ENCODE measurements at regions of chr12 and their contacts with region 1.

Region 1: GRCh38 chr12:57368349-57369095 is 62.3 kb downstream of the R3HDM2 start:
- DNase-seq: no peak
- H3K4me3 ChIP-seq: no peak overlapping the region
- H3K27ac ChIP-seq: no peak overlapping the region
- H3K4me1 ChIP-seq: no peaks in the 10 kb centered on the region
- H3K27me3 ChIP-seq: no peaks in the 10 kb centered on the region
- CTCF ChIP-seq: peak in 1 of 3 experiments; percentile 32; a peak in 1 of 4 replicates
- EP300 ChIP-seq: no peak
- POLR2A ChIP-seq: no peak
- RAD21 ChIP-seq: peak in 1 of 2 experiments; percentile 36; a peak in 2 of 4 replicates

Region 2: GRCh38 chr12:57332646-57333312 is 35.7 kb before region 1 on chr12:
- CTCF ChIA-PET with region 1: interaction called, 13 read pairs
- POLR2A ChIA-PET with region 1: no interaction called
- DNase-seq: no peak
- H3K4me3 ChIP-seq: no peak overlapping the region
- H3K27ac ChIP-seq: no peak overlapping the region
- H3K4me1 ChIP-seq: no peaks in the 10 kb centered on the region
- H3K27me3 ChIP-seq: no peaks in the 10 kb centered on the region
- CTCF ChIP-seq: no peak
- EP300 ChIP-seq: no peak
- POLR2A ChIP-seq: no peak
- RAD21 ChIP-seq: no peak

Region 3: DNA sequence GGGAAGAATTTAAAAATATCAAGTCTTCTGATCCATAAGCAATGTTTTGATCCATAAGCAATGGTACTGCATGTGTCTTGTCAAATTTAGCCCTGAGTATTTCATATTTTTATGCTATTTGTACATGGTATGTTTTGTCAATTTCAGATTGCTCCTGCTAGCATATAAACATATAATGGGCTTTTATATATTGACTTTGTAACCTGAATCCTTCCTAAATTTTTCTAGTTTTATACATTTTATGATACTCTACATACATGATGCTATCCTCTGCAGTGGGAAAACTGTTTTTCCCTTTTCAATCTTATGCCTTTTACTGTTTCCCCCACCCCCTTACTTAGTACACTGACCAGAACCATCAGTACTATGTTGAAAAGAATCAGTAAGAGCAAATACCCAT is 12.8 kb before region 1 on chr12:
- CTCF ChIA-PET with region 1: interaction called, 11 read pairs
- POLR2A ChIA-PET with region 1: interaction called, 3 read pairs
- DNase-seq: no peak
- H3K4me3 ChIP-seq: no peak overlapping the region
- H3K27ac ChIP-seq: no peak overlapping the region
- H3K4me1 ChIP-seq: no peaks in the 10 kb centered on the region
- H3K27me3 ChIP-seq: no peaks in the 10 kb centered on the region
- CTCF ChIP-seq: no peak
- EP300 ChIP-seq: no peak
- POLR2A ChIP-seq: no peak
- RAD21 ChIP-seq: no peak

Measured in H1 (cell line).